ENCODE measurements at regions of chr7 and their contacts with region 1.

Region 1: DNA sequence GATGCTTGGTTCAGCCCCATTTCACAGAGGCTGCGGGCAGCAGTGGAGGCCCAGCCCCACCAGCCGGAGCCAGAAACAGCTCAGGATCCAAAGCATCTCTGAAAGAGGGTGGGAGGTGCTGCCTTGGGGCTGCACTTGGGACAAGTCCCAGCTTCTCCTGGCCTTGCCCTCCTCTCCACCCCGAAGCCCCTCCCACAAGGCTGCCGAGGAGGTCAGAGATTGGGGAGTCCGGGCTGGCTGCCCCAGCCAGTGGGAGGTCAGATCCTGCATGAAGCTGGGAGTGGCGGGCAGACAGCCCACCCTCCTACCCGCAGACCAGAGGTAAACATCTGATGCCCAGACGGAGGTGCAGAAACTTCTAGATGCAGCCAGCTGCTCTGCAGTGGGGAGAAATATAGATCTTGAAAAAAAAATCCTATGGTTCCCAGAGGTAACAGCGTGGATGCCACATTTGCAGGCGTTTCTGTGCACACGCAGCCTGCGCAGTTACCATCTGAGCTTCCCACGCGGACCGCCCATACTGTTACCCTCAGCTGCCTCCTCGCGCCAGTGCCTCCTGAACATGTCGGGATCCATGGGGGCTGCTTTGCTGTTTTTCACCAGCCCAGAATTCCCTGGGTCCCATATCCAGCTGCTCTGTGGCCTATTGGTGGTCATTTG is 36.9 kb upstream of the GNA12 start:
- DNase-seq: no peak
- ATAC-seq: no peak
- H3K4me3 ChIP-seq: no peak overlapping the region
- H3K27ac ChIP-seq: no peak overlapping the region
- H3K4me1 ChIP-seq: peaks cover 24% of the 10 kb centered on the region
- H3K27me3 ChIP-seq: no peaks in the 10 kb centered on the region
- CTCF ChIP-seq: no peak

Region 2: GRCh38 chr7:2248984-2249694 is 631.9 kb before region 1 on chr7:
- CTCF ChIA-PET with region 1: no interaction called
- POLR2A ChIA-PET with region 1: no interaction called
- in situ Hi-C with region 1: no loop called
- intact Hi-C with region 1: no loop called
- DNase-seq: no peak
- ATAC-seq: peak; percentile 63
- H3K4me3 ChIP-seq: no peak overlapping the region
- H3K27ac ChIP-seq: peak overlapping the region; percentile 55; the same call in 1 of the 2 replicates
- H3K4me1 ChIP-seq: peaks cover 5% of the 10 kb centered on the region
- H3K27me3 ChIP-seq: no peaks in the 10 kb centered on the region
- CTCF ChIP-seq: no peak

Region 3: GRCh38 chr7:2572101-2572842 is 308.7 kb before region 1 on chr7:
- CTCF ChIA-PET with region 1: no interaction called
- POLR2A ChIA-PET with region 1: no interaction called
- in situ Hi-C with region 1: no loop called
- intact Hi-C with region 1: no loop called
- DNase-seq: no peak
- ATAC-seq: no peak
- H3K4me3 ChIP-seq: no peak overlapping the region
- H3K27ac ChIP-seq: no peak overlapping the region
- H3K4me1 ChIP-seq: no peaks in the 10 kb centered on the region
- H3K27me3 ChIP-seq: no peaks in the 10 kb centered on the region
- CTCF ChIP-seq: no peak

Region 4: DNA sequence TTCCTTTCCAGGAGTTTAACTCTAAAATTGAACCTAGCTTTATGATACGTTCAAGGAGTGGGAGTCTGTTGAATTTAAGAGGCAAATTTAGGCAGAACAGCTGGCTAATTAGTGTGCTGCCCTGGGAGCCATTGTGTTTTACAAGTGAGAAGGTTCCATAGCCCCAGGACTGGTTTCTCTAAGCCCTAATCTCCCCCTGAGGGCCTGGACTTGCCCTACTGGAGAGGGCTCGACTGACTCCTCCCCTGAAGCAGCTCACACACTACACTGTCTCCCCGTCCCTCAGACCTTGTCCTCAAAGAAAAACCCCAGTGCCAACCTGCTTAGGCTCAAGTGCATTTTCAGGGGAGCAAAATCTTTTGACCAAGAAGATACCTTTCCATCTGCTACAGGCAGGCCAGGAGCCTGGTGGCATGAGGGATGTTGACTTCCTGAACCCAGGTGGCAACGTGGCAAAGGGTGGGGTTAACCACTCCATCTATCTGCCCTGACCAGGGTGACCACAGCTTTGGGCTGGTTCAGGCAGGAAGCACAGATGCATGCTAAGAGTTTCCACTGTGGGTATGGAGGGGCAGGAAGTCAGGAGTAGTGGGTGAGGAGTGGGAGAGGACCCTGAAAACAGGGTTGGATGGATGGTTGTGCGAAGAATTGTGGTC is 231.6 kb after region 1 on chr7:
- CTCF ChIA-PET with region 1: no interaction called
- POLR2A ChIA-PET with region 1: no interaction called
- in situ Hi-C with region 1: no loop called
- intact Hi-C with region 1: no loop called
- DNase-seq: no peak
- ATAC-seq: no peak
- H3K4me3 ChIP-seq: no peak overlapping the region
- H3K27ac ChIP-seq: no peak overlapping the region
- H3K4me1 ChIP-seq: no peaks in the 10 kb centered on the region
- H3K27me3 ChIP-seq: peaks cover 7% of the 10 kb centered on the region
- CTCF ChIP-seq: no peak

Region 5: GRCh38 chr7:3760651-3761050 is 879.6 kb after region 1 on chr7:
- CTCF ChIA-PET with region 1: no interaction called
- POLR2A ChIA-PET with region 1: interaction called, 11 read pairs
- in situ Hi-C with region 1: no loop called
- intact Hi-C with region 1: no loop called
- DNase-seq: no peak
- ATAC-seq: no peak; the same call in 1 of the 2 replicates
- H3K4me3 ChIP-seq: peak overlapping the region in 1 of 2 experiments; percentile 0; a peak in 1 of 4 replicates
- H3K27ac ChIP-seq: peak overlapping the region; percentile 98
- H3K4me1 ChIP-seq: peaks cover 63% of the 10 kb centered on the region
- H3K27me3 ChIP-seq: no peaks in the 10 kb centered on the region
- CTCF ChIP-seq: no peak

Measured in Panc1 (cell line).